GM12878 (cell line): ENCODE measurements at regions of chr6 and their contacts with region 1.

Region 1: GRCh38 chr6:8006208-8006607 is 58.0 kb downstream of the BLOC1S5 start:
- DNase-seq: no peak
- ATAC-seq: peak; percentile 46; the same call in 1 of the 3 replicates
- H3K4me3 ChIP-seq: no peak overlapping the region
- H3K27ac ChIP-seq: no peak overlapping the region
- H3K4me1 ChIP-seq: no peaks in the 10 kb centered on the region
- H3K27me3 ChIP-seq: no peaks in the 10 kb centered on the region
- CTCF ChIP-seq: peak; percentile 27 to 51 (median 32); a peak in 4 of 6 replicates
- EP300 ChIP-seq: no peak
- POLR2A ChIP-seq: no peak
- RAD21 ChIP-seq: peak; percentile 81

Region 2: GRCh38 chr6:7624796-7625710 is 381.2 kb before region 1 on chr6:
- CTCF ChIA-PET with region 1: no interaction called
- POLR2A ChIA-PET with region 1: no interaction called
- RAD21 ChIA-PET with region 1: no interaction called
- SMC1A ChIA-PET with region 1: no interaction called
- in situ Hi-C with region 1: no loop called
- intact Hi-C with region 1: loop called (anchors 10 kb)
- DNase-seq: no peak
- ATAC-seq: no peak
- H3K4me3 ChIP-seq: no peak overlapping the region
- H3K27ac ChIP-seq: no peak overlapping the region
- H3K4me1 ChIP-seq: no peaks in the 10 kb centered on the region
- H3K27me3 ChIP-seq: no peaks in the 10 kb centered on the region
- CTCF ChIP-seq: no peak
- EP300 ChIP-seq: no peak
- POLR2A ChIP-seq: no peak
- RAD21 ChIP-seq: no peak

Region 3: DNA sequence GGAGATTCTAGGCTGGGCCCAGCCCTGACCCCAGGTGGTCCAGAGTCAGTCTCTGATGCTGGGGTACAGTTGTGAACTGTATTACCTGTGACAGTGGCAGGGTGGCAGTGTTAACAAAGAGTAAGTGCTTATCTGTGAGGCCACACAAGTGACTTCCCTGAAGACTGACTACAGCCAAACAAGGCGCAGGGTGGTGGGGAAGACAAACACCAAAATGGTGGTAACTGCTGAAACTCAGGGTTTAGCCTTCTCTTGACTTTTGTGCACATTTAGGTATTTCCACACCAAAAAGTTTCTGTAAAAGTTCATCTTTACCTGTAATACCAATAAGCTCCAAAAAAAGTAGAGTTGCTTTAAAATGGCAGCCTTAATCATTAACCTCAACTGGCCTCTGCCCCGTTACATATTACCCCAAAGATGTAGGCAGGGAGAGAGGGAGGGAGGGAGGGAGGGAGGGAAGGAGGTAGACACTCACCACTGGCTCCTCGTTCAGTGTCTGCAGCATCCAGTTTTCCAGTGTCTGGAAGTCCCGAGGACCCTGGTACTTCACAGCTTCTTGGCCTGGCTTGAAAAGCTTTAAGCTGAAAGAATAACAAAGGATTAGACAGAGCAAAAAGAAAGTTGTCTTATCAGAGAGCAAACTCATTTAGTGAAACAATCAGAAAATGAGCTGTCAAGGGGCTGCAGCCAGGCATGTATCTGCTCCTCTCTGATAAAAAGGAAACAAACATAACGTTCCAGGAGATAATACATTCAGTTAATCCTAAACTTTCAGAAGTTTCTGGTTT is 106.9 kb before region 1 on chr6:
- CTCF ChIA-PET with region 1: interaction called, 16 read pairs
- POLR2A ChIA-PET with region 1: no interaction called
- RAD21 ChIA-PET with region 1: interaction called, 6 read pairs
- SMC1A ChIA-PET with region 1: interaction called, 8 read pairs
- in situ Hi-C with region 1: no loop called
- intact Hi-C with region 1: no loop called
- DNase-seq: no peak
- ATAC-seq: peak; percentile 77
- H3K4me3 ChIP-seq: no peak overlapping the region
- H3K27ac ChIP-seq: no peak overlapping the region
- H3K4me1 ChIP-seq: peaks cover 21% of the 10 kb centered on the region
- H3K27me3 ChIP-seq: no peaks in the 10 kb centered on the region
- CTCF ChIP-seq: peak; percentile 31 to 50 (median 34); a peak in 4 of 6 replicates
- EP300 ChIP-seq: no peak
- POLR2A ChIP-seq: no peak
- RAD21 ChIP-seq: peak; percentile 65

Region 4: DNA sequence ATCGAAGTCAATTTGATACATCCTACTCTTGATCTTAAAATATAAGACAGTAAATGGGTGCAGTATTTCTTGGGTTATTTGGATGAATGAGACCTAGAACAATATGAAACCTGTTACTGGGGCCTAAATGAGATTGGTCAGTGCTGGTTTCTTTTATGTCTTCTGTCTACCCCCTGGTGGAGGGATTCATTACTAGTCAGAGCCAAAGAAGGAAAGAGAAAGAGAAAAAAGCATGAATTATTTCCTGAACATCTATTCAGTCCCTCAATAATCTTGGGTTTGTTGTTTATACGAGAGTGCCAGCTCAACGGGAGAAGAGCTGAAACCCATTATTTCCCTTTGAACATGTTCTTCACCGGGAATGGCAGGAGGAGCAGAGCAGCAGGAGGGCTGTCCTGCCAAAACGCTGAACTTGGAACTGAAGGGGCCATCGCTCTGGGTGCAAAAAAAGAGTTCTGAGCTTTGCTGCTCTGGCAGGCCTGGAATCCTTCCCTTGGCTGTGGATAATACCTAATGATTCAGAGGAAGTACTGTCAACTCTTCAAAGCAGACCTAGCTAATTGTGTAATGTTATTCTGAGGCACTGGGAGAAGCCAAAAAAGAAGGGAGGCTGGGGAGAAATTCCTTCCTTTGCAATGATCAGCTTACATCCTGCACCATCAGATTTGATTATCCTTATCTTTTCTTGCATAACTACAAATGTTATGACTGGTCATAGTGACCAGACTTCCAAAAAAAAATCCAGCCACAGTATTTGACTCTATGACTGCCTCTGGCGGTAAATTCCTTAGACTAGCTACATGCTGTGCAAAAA is 14.0 kb before region 1 on chr6:
- CTCF ChIA-PET with region 1: interaction called, 13 read pairs
- POLR2A ChIA-PET with region 1: no interaction called
- RAD21 ChIA-PET with region 1: no interaction called
- SMC1A ChIA-PET with region 1: interaction called, 4 read pairs
- in situ Hi-C with region 1: no loop called
- intact Hi-C with region 1: no loop called
- DNase-seq: peak; percentile 13
- ATAC-seq: peak; percentile 90
- H3K4me3 ChIP-seq: no peak overlapping the region
- H3K27ac ChIP-seq: no peak overlapping the region
- H3K4me1 ChIP-seq: no peaks in the 10 kb centered on the region
- H3K27me3 ChIP-seq: no peaks in the 10 kb centered on the region; a peak in 1 of 4 replicates
- CTCF ChIP-seq: peak; percentile 37 to 57 (median 38)
- EP300 ChIP-seq: no peak
- POLR2A ChIP-seq: no peak
- RAD21 ChIP-seq: peak; percentile 91